BJ (cell line): ENCODE measurements at regions of chr7 and their contacts with region 1.

Region 1: DNA sequence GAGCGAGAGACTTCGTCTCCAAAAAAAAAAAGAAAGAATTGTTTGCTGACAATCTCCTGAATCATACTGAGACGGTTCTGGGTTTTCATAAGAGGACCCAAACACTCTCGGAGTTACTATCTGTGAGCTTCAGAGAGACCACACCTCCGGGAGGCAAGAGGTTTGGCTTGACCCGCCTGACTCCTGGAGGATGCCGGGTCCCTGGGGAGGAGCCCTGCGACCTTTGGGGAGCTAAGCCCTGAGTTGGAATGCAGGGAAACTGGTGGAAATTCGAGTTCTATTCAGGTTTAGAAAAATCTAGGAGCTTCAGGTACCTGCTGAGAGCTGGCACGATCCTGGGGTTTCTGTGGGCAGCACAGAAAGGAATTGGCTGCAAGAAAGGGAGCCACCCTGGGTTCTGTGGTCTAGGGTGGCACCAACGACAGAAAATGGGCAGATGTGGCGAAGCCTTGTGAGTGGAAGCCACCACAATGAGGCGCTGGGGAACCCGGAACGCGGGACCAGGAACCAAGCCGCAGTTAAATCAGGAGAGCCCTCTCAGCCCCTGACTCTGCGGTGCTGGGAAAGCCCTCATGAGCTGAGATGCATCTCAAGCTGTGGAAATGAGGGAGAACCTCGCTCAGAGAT is 21.8 kb upstream of the GATAD1 start:
- DNase-seq: no peak
- H3K4me3 ChIP-seq: no peak overlapping the region
- H3K27me3 ChIP-seq: no peaks in the 10 kb centered on the region
- CTCF ChIP-seq: no peak

Region 2: GRCh38 chr7:92412745-92413144 is 12.7 kb before region 1 on chr7:
- CTCF ChIA-PET with region 1: interaction called, 36 read pairs
- POLR2A ChIA-PET with region 1: interaction called, 3 read pairs
- DNase-seq: no peak
- H3K4me3 ChIP-seq: no peak overlapping the region
- H3K27me3 ChIP-seq: peaks cover 7% of the 10 kb centered on the region
- CTCF ChIP-seq: no peak

Region 3: DNA sequence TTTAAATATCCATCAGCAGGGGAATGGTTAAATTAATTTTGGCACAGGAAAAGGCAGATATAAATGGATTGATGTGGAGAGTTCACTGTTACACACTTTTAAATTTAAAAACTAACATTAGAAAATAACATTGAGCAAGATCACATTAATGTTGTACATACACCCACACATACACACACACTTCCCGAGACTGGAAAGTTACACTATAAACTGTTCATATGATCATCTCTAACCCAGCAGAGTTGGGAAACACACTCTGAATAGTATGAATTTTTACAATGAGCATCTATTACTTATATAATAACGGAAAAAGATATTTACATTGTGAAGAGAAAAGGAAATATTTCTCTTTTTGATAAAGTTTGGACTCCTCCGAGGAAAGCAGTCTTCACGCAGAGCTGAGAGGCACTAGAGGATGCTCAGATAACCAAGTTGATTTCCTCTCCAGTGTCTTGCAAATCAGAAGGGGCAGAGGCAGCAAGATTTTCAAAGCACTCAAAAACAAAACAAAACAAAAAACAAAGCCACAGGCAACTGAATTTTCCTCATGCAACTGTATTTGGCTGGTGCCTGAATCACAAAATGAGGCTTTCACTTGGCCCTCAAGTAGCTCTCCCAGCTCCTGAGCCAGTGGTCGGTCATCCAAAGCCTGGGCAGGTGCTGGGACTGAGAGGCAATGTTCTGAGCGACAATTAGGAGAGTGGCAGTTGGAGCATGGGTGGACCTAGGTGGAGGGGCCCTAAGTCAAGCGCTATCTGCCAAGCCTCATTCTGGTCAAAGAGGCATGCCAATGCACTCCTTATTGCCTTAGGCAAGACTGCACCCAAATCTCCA is 11.4 kb after region 1 on chr7:
- CTCF ChIA-PET with region 1: interaction called, 13 read pairs
- POLR2A ChIA-PET with region 1: no interaction called
- DNase-seq: no peak
- H3K4me3 ChIP-seq: no peak overlapping the region
- H3K27me3 ChIP-seq: 0 out of 2 replicates have a peak, but pooled peaks cover 1% of the 10 kb centered on the region
- CTCF ChIP-seq: no peak